ENCODE measurements at regions of chr10 and their contacts with region 1.

Region 1: DNA sequence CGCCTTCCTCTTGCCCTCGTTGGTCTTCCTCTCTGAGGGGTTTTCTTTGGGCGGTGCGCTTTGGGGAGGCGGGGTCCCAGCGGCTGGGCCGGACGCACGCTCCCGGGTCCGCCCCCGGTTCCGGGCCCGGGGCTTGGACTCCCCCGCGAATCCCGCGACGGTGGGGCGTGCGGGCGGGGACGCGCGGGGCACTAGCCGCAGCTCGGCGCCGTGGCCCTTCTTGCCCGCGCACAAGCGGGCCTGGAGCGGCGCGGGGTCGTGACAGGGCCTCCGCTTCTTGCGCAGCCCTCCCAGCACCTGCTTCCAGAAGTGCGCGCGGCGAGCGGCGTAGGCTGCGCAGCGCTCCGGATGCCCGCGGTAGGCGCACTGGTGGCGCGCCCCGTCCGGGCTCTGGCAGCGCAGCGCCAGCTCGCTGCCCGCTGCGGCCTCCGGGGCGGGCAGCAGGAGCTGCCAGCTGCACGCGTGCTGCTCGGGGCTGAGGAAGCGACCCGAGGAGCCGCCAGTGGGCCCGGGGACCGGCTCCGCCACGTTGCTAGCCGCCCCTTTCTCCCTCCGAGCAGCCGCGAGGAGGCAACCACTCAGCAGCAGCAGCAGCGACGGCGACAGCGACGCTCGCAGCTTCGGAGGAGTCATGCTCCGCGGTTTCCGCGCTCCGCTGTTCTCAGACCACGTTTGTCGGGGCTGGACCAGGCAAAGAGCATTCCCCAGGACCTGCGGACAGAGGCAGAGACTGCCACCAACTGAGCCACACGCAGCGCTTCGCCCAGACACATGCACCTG is 759 bp downstream of the FGFBP3 start:
- H3K4me3 Mint-ChIP-seq: peak overlapping the region; percentile 83
- H3K27ac Mint-ChIP-seq: peak overlapping the region; percentile 51
- H3K4me1 Mint-ChIP-seq: peaks cover 18% of the 10 kb centered on the region
- H3K27me3 Mint-ChIP-seq: peaks cover 2% of the 10 kb centered on the region

Region 2: DNA sequence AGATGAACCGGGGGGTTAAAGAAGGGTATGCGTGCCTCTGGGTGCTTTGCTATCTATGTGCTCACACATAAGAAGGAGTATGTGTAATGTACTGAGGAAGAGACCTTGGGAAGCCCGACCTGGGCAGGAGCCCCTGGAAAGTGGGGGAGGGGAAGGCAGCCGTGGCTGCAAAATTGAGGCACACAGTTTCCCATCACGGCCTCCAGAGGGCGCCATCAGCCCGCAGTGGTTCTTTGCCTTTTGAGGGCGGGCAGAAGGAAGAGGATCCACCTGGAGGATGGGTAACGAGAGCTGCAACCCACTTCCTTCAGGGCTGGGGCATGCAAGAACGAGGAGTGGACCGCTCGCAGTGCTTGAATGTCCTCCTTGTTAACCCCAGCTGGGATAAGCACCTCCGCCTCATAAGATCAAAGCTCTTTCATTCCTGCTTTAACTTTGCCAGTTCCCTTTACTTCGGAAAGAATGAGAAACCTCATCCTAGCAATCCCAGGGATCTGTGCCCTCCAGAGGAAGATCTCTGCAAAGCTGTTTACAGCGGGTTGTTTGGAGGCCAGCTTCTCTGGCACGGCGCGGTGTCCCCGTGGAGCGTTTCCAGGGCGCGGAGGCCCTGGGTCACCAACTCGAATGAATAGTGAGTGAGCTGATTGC is 610.2 kb before region 1 on chr10:
- intact Hi-C with region 1: loop called (anchors 2 kb)
- H3K4me3 Mint-ChIP-seq: no peak overlapping the region
- H3K27ac Mint-ChIP-seq: no peak overlapping the region
- H3K4me1 Mint-ChIP-seq: peaks cover 9% of the 10 kb centered on the region
- H3K27me3 Mint-ChIP-seq: peaks cover 14% of the 10 kb centered on the region

Region 3: DNA sequence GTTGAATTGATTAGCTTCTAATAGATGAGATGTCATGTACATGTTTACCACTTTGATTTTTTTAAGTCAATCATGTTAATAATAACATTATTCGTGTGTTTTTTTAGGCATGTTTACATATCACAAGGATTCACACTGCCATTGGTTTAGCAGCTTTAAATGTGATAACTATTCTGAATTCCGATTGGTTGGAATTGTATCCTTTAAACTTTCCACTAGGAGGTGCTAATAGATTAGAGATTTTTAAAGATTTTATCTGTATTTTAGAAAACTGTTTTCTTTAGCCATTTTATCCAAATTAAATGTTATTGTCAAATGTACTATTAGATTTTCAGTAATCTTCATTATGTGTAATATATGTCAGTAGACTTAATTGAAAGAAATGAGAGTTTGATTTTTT is 415.2 kb before region 1 on chr10:
- intact Hi-C with region 1: loop called (anchors 5 kb)
- H3K4me3 Mint-ChIP-seq: no peak overlapping the region
- H3K27ac Mint-ChIP-seq: no peak overlapping the region
- H3K4me1 Mint-ChIP-seq: no peaks in the 10 kb centered on the region
- H3K27me3 Mint-ChIP-seq: no peaks in the 10 kb centered on the region

Region 4: DNA sequence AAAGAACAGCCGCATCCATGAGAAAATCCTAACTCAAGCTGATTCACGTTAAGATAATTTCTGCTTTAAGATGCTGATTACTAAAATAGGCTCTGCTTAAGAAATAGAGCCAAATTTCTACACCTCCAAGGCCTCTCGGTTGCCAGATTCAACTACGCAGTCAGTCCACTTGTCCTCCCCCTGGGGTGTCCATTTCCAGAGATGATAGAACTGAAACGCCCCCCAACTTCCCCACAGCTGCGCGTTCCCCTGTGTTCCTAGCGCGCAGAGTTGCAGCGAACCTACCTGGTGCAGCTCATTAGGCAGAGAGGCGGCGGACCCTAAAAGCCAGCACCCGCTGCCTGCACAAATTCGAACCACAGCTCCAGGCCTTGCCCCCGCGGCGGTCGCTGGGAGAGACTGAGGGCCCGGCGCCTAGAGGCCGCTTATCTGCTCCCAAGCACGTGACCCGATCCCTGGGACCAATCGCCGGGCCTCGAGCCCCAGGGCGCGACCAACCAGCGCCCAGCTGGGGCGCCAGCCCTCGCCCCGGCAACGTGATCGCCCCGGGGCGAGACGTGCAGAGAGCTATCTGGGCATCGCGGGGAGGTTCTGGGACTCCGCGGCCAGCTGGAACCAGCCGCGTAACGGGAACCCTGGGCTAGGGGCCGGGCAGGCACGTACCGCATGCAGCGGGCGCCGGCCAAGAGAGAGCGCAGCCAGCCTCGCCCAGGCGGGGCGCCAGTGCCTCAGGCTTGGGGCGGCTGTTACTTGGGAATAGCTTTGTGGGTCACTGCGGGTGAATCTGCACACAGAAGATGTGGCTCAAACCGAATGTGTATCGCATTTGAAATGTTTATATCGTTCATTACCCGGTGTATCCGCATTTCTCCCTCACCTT is 275.6 kb before region 1 on chr10 and contains the start of gene PPP1R3C:
- intact Hi-C with region 1: loop called (anchors 10 kb)
- H3K4me3 Mint-ChIP-seq: peak within 1 kb of the TSS; percentile 67
- H3K27ac Mint-ChIP-seq: no peak within 1 kb of the TSS
- H3K4me1 Mint-ChIP-seq: peaks cover 8% of the 10 kb centered on the region
- H3K27me3 Mint-ChIP-seq: peaks cover 39% of the 10 kb centered on the region

Region 5: DNA sequence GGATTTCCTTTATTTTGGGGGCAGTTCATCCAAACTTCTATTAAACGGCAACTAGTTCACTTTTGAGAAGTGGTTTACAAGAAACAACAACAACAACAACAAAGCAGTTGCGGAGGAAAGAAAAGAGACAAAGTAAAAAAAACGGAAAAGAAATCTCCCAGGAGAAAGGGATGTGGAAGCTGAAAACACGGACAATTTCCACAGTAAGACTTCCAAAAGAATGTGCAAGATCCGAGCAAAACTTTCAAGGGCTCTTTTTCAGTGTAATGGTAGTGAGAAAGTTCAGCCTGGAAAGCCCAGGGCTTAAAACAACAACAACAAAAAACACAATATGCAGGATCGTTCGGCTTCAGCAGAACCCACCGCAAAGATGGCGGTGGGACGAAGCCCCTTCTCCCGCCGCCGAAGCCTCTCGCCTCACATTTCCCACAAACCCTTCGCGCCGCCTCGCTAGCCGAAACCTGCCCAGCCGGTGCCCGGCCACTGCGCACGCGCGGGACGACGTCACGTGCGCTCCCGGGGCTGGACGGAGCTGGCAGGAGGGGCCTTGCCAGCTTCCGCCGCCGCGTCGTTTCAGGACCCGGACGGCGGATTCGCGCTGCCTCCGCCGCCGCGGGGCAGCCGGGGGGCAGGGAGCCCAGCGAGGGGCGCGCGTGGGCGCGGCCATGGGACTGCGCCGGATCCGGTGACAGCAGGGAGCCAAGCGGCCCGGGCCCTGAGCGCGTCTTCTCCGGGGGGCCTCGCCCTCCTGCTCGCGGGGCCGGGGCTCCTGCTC is 110.5 kb before region 1 on chr10 and contains the start of gene TNKS2:
- intact Hi-C with region 1: loop called (anchors 5 kb)
- H3K4me3 Mint-ChIP-seq: peak within 1 kb of the TSS; percentile 96
- H3K27ac Mint-ChIP-seq: peak within 1 kb of the TSS; percentile 99
- H3K4me1 Mint-ChIP-seq: peaks cover 52% of the 10 kb centered on the region
- H3K27me3 Mint-ChIP-seq: peaks cover 6% of the 10 kb centered on the region